HEK293T (cell line): ENCODE measurements at regions of chr2 and their contacts with region 1.

Region 1: GRCh38 chr2:99154643-99155536 is at the starts of genes LIPT1 and TSGA10:
- DNase-seq: peak; percentile 90

Region 2: DNA sequence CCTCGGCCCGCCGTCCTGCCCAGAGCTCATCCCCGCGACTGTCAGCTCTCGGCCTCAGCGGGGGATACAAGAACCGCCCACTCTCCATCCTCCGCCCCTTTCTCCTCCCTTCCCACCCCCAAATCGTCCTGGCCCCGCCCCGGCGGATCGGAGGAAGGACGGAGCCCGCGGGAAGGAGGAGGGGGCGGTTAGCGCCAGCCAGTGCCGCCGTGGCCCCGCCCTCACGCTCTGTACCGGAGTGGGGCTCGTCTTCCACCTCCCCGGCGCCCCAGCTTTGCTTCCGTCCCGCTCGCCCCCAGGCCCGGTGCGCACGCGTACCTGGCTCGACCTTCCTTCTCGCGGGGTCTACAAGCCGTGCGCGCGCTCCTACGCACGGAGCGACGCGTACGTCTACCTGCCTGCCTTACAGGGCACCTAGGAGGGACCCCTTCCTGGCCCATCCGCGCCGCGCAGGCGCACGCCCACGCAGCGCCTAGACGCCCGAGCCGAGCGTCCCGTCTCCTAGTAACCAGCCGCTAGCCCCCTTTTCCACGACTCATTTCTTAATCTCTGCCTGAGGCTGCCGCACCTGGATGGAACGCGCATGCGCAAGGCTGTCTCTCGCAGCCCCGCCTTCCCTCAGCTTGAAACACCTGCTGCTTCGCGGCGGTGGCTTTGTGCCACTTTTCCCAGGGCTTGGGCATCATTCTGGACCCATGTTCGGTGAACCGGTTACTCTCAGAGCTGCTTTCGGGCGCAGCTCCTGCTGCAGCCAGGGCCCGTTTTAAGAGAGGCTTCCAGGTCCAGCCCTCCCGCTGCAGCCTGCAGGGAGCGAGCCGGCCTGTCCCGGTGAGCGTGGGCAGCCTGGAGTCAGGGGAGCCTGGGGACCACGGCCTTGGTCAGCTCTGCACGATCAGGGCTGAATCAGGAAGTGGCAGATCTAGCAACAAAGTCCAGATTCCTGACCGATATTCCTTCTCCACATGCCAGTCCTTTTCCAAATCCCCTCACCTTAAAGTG is 13.5 kb before region 1 on chr2 and contains the start of gene C2orf15:
- CTCF ChIA-PET with region 1: interaction called, 3 read pairs
- POLR2A ChIA-PET with region 1: interaction called, 77 read pairs
- DNase-seq: peak; percentile 90

Region 3: GRCh38 chr2:99169534-99169933 is 14.6 kb after region 1 on chr2:
- CTCF ChIA-PET with region 1: no interaction called
- POLR2A ChIA-PET with region 1: interaction called, 44 read pairs
- DNase-seq: no peak

Region 4: DNA sequence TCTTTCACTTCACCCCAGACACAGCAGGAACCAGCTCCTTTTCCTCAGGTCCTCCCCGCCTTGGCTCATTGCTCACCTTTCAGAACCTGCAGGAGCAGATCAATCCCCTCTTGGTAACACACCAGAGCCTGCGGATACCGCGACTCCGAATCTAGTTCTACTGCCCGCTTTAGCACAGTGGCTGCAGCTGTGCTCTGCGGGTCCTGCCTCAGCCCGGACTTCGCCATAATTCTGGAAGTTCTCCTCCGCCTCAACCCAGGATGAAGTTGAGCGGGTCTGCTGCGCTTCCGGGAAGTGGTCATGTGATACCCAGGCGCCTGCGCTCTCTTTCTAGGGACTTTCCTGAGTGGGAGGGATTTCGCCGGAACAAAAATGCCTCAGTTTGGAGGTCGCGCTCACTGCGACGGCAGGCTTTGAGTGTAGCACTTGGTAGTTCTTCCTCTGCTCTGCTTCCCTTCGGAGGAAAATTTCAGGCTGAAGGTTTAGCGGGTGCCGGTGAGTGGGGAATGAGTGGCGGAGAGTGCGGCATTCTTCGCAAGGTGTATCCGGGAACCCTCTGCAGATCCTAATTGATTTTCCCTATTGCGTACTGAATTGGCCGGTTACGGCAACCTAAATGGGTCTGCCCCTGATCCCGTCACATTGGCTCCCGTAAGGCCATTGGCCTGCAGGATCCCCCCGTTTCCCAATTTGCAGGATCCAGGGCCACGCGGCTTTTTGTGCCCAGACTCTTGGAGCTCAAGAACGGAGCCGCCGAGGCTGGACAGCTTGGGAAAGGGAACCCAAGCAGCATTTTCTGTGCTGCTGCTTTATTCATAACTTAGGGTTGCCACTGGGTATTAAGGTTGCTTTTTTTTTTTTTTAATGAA is 26.1 kb after region 1 on chr2 and contains the starts of genes MITD1 and MRPL30:
- CTCF ChIA-PET with region 1: no interaction called
- POLR2A ChIA-PET with region 1: interaction called, 31 read pairs
- DNase-seq: peak; percentile 84

Region 5: GRCh38 chr2:99670768-99671734 is 516.2 kb after region 1 on chr2:
- CTCF ChIA-PET with region 1: no interaction called
- POLR2A ChIA-PET with region 1: no interaction called
- DNase-seq: no peak